Heart right ventricle (tissue), 16 donors: ENCODE measurements at regions of chr11 and their contacts with region 1.

Region 1: GRCh38 chr11:41146326-41146725 is 313.1 kb downstream of the LRRC4C start:
- DNase-seq: no peak
- ATAC-seq: no peak
- H3K4me3 ChIP-seq: no peak overlapping the region
- H3K27ac ChIP-seq: no peak overlapping the region
- H3K4me1 ChIP-seq: no peaks in the 10 kb centered on the region
- H3K27me3 ChIP-seq: no peaks in the 10 kb centered on the region
- CTCF ChIP-seq: no peak

Region 2: GRCh38 chr11:41189701-41190436 is 43.5 kb after region 1 on chr11:
- intact Hi-C with region 1: loop called in 1 of 10 experiments (anchors 1 kb)
- DNase-seq: no peak
- ATAC-seq: no peak
- H3K4me3 ChIP-seq: no peak overlapping the region
- H3K27ac ChIP-seq: no peak overlapping the region
- H3K4me1 ChIP-seq: no peaks in the 10 kb centered on the region
- H3K27me3 ChIP-seq: no peaks in the 10 kb centered on the region
- CTCF ChIP-seq: no peak